ENCODE measurements at regions of chr19 and their contacts with region 1.

Region 1: GRCh38 chr19:34291235-34291634 is 36.9 kb downstream of the GARRE1 start:
- DNase-seq: no peak
- H3K4me3 ChIP-seq: no peak overlapping the region
- H3K4me3 Mint-ChIP-seq: no peak overlapping the region
- H3K27ac ChIP-seq: no peak overlapping the region
- H3K27ac Mint-ChIP-seq: no peak overlapping the region
- H3K4me1 ChIP-seq: no peaks in the 10 kb centered on the region
- H3K4me1 Mint-ChIP-seq: no peaks in the 10 kb centered on the region
- H3K27me3 ChIP-seq: no peaks in the 10 kb centered on the region
- H3K27me3 Mint-ChIP-seq: peaks cover 5 to 12% (median 9%) of the 10 kb centered on the region in 3 donors
- CTCF ChIP-seq: no peak

Region 2: GRCh38 chr19:34305221-34306083 is 14.2 kb after region 1 on chr19:
- intact Hi-C with region 1: loop called in 1 of 2 experiments (anchors 2 kb)
- DNase-seq: no peak
- H3K4me3 ChIP-seq: no peak overlapping the region
- H3K4me3 Mint-ChIP-seq: no peak overlapping the region
- H3K27ac ChIP-seq: no peak overlapping the region
- H3K27ac Mint-ChIP-seq: no peak overlapping the region
- H3K4me1 ChIP-seq: peaks cover 4 to 5% of the 10 kb centered on the region in 2 donors
- H3K4me1 Mint-ChIP-seq: peaks cover 7% of the 10 kb centered on the region
- H3K27me3 ChIP-seq: no peaks in the 10 kb centered on the region
- H3K27me3 Mint-ChIP-seq: peaks cover 2 to 4% (median 4%) of the 10 kb centered on the region in 3 donors
- CTCF ChIP-seq: no peak